Activated CD8-positive, alpha-beta memory T cell treated with anti-CD3 and anti-CD28 coated beads, Interleukin-2, amount 10 ng/mL, durations not matched to agents 7 days and 5 days (primary cell): ENCODE measurements at regions of chr17 and their contacts with region 1.

Region 1: GRCh38 chr17:21457051-21458026 is 81.2 kb downstream of the KCNJ12 start:
- DNase-seq: peak; percentile 92
- ATAC-seq: peak; percentile 95
- H3K4me3 Mint-ChIP-seq: no peak overlapping the region
- H3K27ac Mint-ChIP-seq: no peak overlapping the region
- H3K4me1 Mint-ChIP-seq: peaks cover 18% of the 10 kb centered on the region
- H3K27me3 Mint-ChIP-seq: peaks cover 17% of the 10 kb centered on the region

Region 2: GRCh38 chr17:21268596-21269188 is 188.6 kb before region 1 on chr17:
- CTCF ChIA-PET with region 1: no interaction called
- DNase-seq: no peak
- ATAC-seq: no peak
- H3K4me3 Mint-ChIP-seq: no peak overlapping the region
- H3K27ac Mint-ChIP-seq: peak overlapping the region; percentile 74
- H3K4me1 Mint-ChIP-seq: peaks cover 22% of the 10 kb centered on the region
- H3K27me3 Mint-ChIP-seq: peaks cover 4% of the 10 kb centered on the region

Region 3: DNA sequence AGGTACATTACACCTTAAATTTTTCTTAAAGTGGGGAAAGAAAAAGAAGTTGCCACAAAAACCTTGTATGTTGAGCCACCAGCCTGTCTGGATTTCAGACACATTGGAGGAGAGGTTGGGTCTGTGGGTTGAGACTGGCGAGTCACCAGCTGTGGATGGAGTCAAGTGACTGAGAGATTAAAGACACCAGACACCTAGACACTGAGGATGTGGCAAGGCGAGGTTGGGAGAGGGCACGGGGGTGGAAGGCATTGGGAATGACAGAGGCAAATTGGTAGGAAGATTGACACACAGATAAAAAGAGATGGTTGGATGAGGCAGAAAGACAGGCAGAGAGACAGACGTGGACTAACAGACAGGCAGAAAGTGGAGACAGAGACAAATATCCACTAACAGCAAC is 31.6 kb before region 1 on chr17:
- CTCF ChIA-PET with region 1: no interaction called
- DNase-seq: no peak
- ATAC-seq: no peak
- H3K4me3 Mint-ChIP-seq: no peak overlapping the region
- H3K27ac Mint-ChIP-seq: no peak overlapping the region
- H3K4me1 Mint-ChIP-seq: no peaks in the 10 kb centered on the region
- H3K27me3 Mint-ChIP-seq: peaks cover 6% of the 10 kb centered on the region

Region 4: GRCh38 chr17:21470861-21471260 is 13.5 kb after region 1 on chr17:
- CTCF ChIA-PET with region 1: interaction called, 11 read pairs
- DNase-seq: no peak
- ATAC-seq: no peak
- H3K4me3 Mint-ChIP-seq: no peak overlapping the region
- H3K27ac Mint-ChIP-seq: no peak overlapping the region
- H3K4me1 Mint-ChIP-seq: no peaks in the 10 kb centered on the region
- H3K27me3 Mint-ChIP-seq: peaks cover 35% of the 10 kb centered on the region

Region 5: DNA sequence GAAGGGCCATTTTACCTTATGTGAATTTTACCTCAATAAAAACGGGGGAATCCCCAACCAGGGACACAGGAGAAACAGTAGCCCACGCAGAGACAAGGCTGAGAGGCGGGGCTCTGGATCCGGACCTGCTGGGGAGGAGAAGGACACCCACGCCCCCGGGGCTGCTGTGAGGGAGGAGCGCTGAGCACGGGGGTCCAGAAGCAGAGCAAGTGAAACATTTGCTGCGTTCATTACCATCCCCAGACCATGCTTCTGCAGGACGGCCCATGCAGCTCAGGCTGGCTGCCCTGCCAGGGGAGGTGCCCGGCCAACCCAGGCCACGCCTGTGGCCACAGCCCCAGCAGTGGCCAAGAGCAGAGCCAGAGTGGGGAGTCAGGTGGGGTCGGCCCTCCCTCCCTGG is 285.0 kb after region 1 on chr17:
- CTCF ChIA-PET with region 1: no interaction called
- DNase-seq: no peak
- ATAC-seq: no peak
- H3K4me3 Mint-ChIP-seq: no peak overlapping the region
- H3K27ac Mint-ChIP-seq: no peak overlapping the region
- H3K4me1 Mint-ChIP-seq: no peaks in the 10 kb centered on the region
- H3K27me3 Mint-ChIP-seq: no peaks in the 10 kb centered on the region